Right cardiac atrium (tissue), 5 donors: ENCODE measurements at regions of chr13 and their contacts with region 1.

Region 1: DNA sequence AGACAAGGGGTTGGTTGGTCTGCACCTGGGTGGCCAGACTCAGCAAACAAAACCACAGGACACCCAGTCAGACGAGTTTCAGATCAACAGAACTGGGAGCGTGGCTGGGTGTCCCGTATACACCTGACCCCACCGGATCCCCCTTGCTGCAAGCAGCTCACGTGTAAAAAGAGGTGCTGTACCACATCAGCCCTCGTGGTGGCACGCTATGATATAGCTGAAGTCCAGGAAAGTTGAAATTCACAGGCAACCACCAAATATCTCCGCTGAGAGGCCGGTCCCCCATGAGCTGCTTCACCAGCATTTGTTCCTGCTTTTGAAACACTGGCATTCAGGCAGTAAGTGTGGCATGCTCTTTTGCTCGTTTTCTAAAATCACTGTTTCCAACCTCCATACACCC is 92.3 kb downstream of the TUBA3C start:
- DNase-seq: no peak
- ATAC-seq: no peak
- H3K4me3 ChIP-seq: no peak overlapping the region
- H3K27ac ChIP-seq: no peak overlapping the region
- H3K4me1 ChIP-seq: no peaks in the 10 kb centered on the region
- H3K27me3 ChIP-seq: no peaks in the 10 kb centered on the region

Region 2: GRCh38 chr13:19023115-19023514 is 66.2 kb before region 1 on chr13:
- intact Hi-C with region 1: loop called in 1 of 4 experiments (anchors 10 kb)
- DNase-seq: no peak
- ATAC-seq: no peak
- H3K4me3 ChIP-seq: no peak overlapping the region
- H3K27ac ChIP-seq: no peak overlapping the region
- H3K4me1 ChIP-seq: no peaks in the 10 kb centered on the region
- H3K27me3 ChIP-seq: no peaks in the 10 kb centered on the region

Region 3: GRCh38 chr13:19123502-19123901 is 34.2 kb after region 1 on chr13:
- intact Hi-C with region 1: no loop called
- DNase-seq: no peak
- ATAC-seq: no peak
- H3K4me3 ChIP-seq: no peak overlapping the region
- H3K27ac ChIP-seq: no peak overlapping the region
- H3K4me1 ChIP-seq: no peaks in the 10 kb centered on the region
- H3K27me3 ChIP-seq: no peaks in the 10 kb centered on the region